ENCODE measurements at regions of chr18 and their contacts with region 1.

Region 1: DNA sequence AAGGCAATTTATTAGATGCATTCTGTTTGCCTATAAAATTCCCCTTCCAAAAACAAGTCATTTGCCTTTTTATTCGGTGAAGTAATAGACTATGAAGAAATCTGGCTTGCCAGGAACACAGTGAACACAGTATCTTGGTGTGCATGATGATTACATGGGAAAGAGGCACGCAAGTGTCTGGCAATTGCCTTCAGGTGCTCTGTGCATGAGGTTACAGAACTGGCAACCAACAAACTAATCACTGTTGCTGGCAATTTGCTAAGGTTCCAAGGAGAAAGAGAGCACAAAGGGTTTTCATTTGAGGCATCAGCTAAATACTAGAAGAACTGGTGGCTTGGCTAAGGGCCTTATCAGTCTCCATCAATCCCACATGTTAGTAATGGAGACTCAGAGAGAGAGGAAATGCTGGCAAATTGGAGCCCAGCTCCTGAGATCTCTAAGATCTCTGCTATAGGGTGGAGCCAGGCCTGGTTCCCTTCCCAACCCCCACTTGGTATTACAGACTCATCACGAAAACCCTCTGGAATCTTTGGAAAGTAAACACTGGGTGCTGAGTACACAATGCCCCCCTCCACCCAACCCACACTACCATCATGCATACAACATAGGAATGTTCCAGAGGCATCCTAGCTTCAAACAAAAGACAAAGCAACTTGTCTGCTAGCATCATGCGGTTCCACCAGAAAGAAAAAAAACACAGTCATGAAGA is 10.4 kb downstream of the RNF152 start:
- DNase-seq: no peak
- ATAC-seq: peak in 1 of 4 donors; percentile 52
- H3K4me3 ChIP-seq: no peak overlapping the region
- H3K27ac ChIP-seq: no peak overlapping the region
- H3K4me1 ChIP-seq: peaks cover 0 to 38% (median 6%) of the 10 kb centered on the region in 12 donors
- H3K27me3 ChIP-seq: no peaks in the 10 kb centered on the region
- CTCF ChIP-seq: no peak
- POLR2A ChIP-seq: no peak

Region 2: GRCh38 chr18:61596296-61596695 is 286.2 kb before region 1 on chr18:
- intact Hi-C with region 1: no loop called
- DNase-seq: no peak
- ATAC-seq: no peak
- H3K4me3 ChIP-seq: peak overlapping the region in 1 of 12 donors; percentile 30
- H3K27ac ChIP-seq: no peak overlapping the region
- H3K4me1 ChIP-seq: peaks cover 0 to 15% (median 0%) of the 10 kb centered on the region in 12 donors
- H3K27me3 ChIP-seq: no peaks in the 10 kb centered on the region
- CTCF ChIP-seq: no peak
- POLR2A ChIP-seq: no peak

Region 3: GRCh38 chr18:61833387-61833786 is 49.1 kb before region 1 on chr18:
- intact Hi-C with region 1: loop called in 1 of 10 experiments (anchors 10 kb)
- DNase-seq: no peak
- ATAC-seq: peak in 3 of 4 donors; percentile 44 to 79 (median 51)
- H3K4me3 ChIP-seq: peak overlapping the region in 3 of 12 donors; percentile 1 to 18 (median 15)
- H3K27ac ChIP-seq: peak overlapping the region in 9 of 12 donors; percentile 13 to 71 (median 49)
- H3K4me1 ChIP-seq: peaks cover 0 to 68% (median 36%) of the 10 kb centered on the region in 12 donors
- H3K27me3 ChIP-seq: peaks cover 0 to 34% (median 0%) of the 10 kb centered on the region in 9 donors
- CTCF ChIP-seq: no peak
- POLR2A ChIP-seq: no peak

Region 4: DNA sequence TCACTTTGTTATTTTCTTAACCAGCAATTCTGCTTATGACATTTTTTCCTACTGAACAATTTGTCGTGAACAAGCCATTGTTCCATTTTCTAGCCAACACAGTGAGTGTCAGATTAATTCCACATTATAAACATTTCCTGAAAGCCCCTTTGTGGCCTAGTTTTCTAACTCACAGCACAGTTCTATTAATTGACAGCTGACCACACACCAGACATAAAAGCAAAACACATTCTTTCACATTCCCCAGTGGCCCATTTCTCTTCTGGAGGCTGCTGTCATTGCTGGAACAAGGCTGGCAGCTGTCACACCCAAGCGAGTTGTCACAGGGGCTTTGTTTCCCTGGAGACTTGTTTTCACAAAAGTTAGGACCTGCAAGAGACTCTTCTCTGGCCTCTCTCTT is 40.3 kb before region 1 on chr18:
- intact Hi-C with region 1: loop called in 2 of 10 experiments (anchors 5 to 10 kb)
- DNase-seq: no peak
- ATAC-seq: peak in 2 of 4 donors; percentile 32 to 51
- H3K4me3 ChIP-seq: no peak overlapping the region
- H3K27ac ChIP-seq: peak overlapping the region in 6 of 12 donors; percentile 13 to 45 (median 24)
- H3K4me1 ChIP-seq: peaks cover 0 to 40% (median 7%) of the 10 kb centered on the region in 12 donors
- H3K27me3 ChIP-seq: peaks cover 0 to 9% (median 0%) of the 10 kb centered on the region in 9 donors
- CTCF ChIP-seq: no peak
- POLR2A ChIP-seq: no peak